Activated CD4-positive, alpha-beta memory T cell treated with anti-CD3 and anti-CD28 coated beads for 36 hours (primary cell): ENCODE measurements at regions of chr1 and their contacts with region 1.

Region 1: GRCh38 chr1:31548907-31549808 is 27.2 kb upstream of the TINAGL1 start:
- DNase-seq: peak; percentile 93
- H3K4me3 Mint-ChIP-seq: peak overlapping the region; percentile 49
- H3K27ac Mint-ChIP-seq: no peak overlapping the region
- H3K4me1 Mint-ChIP-seq: peaks cover 13% of the 10 kb centered on the region
- H3K27me3 Mint-ChIP-seq: peaks cover 9% of the 10 kb centered on the region

Region 2: GRCh38 chr1:31296486-31297276 is 252.5 kb before region 1 on chr1 and contains the starts of genes SNRNP40 and ZCCHC17:
- CTCF ChIA-PET with region 1: interaction called, 7 read pairs
- POLR2A ChIA-PET with region 1: no interaction called
- intact Hi-C with region 1: loop called (anchors 5 kb)
- DNase-seq: peak; percentile 95
- H3K4me3 Mint-ChIP-seq: no peak within 1 kb of the TSS
- H3K27ac Mint-ChIP-seq: no peak within 1 kb of the TSS
- H3K4me1 Mint-ChIP-seq: peaks cover 32% of the 10 kb centered on the region
- H3K27me3 Mint-ChIP-seq: no peaks in the 10 kb centered on the region
- total RNA-seq, gene SNRNP40: 83.7 to 96.4 TPM
- total RNA-seq, gene ZCCHC17: 24.4 to 29.6 TPM

Region 3: GRCh38 chr1:31422505-31423319 is 126.4 kb before region 1 on chr1:
- CTCF ChIA-PET with region 1: interaction called, 33 read pairs
- POLR2A ChIA-PET with region 1: no interaction called
- intact Hi-C with region 1: loop called (anchors 1 kb)
- DNase-seq: peak; percentile 79
- H3K4me3 Mint-ChIP-seq: no peak overlapping the region
- H3K27ac Mint-ChIP-seq: no peak overlapping the region
- H3K4me1 Mint-ChIP-seq: no peaks in the 10 kb centered on the region
- H3K27me3 Mint-ChIP-seq: peaks cover 23% of the 10 kb centered on the region

Region 4: DNA sequence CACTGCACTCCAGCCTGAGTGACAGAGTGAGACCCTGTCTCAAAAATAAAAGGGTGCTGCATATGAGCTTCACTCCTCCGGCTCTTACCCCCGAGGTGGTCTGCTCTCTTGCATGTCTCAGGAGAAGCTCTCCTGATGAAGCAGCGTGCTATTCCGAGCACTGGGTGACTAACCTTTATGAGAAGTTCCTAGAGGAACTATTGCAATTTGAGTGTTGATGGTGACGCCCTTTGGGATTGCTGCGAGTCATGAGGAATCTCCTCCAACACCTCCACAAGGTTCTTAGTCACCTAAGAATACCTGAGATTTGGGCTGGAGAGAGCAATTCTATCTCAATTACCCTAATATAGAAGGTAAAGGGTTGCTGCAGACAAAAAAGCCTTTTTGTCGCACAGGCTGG is 13.6 kb before region 1 on chr1:
- CTCF ChIA-PET with region 1: interaction called, 11 read pairs
- POLR2A ChIA-PET with region 1: no interaction called
- intact Hi-C with region 1: no loop called
- DNase-seq: no peak
- H3K4me3 Mint-ChIP-seq: no peak overlapping the region
- H3K27ac Mint-ChIP-seq: no peak overlapping the region
- H3K4me1 Mint-ChIP-seq: peaks cover 8% of the 10 kb centered on the region
- H3K27me3 Mint-ChIP-seq: peaks cover 9% of the 10 kb centered on the region